Caco-2 (cell line): ENCODE measurements at regions of chr11 and their contacts with region 1.

Region 1: GRCh38 chr11:86068951-86069407 is at the start of gene PICALM:
- DNase-seq: peak; percentile 100
- H3K4me3 ChIP-seq: peak within 1 kb of the TSS; percentile 91
- H3K4me3 Mint-ChIP-seq: peak within 1 kb of the TSS; percentile 95
- H3K27ac Mint-ChIP-seq: peak within 1 kb of the TSS; percentile 85
- H3K4me1 ChIP-seq: peaks cover 24% of the 10 kb centered on the region
- H3K4me1 Mint-ChIP-seq: peaks cover 24% of the 10 kb centered on the region
- H3K27me3 ChIP-seq: no peaks in the 10 kb centered on the region
- H3K27me3 Mint-ChIP-seq: no peaks in the 10 kb centered on the region
- CTCF ChIP-seq: no peak
- total RNA-seq, gene PICALM: 321 and 331 TPM in 2 replicates

Region 2: DNA sequence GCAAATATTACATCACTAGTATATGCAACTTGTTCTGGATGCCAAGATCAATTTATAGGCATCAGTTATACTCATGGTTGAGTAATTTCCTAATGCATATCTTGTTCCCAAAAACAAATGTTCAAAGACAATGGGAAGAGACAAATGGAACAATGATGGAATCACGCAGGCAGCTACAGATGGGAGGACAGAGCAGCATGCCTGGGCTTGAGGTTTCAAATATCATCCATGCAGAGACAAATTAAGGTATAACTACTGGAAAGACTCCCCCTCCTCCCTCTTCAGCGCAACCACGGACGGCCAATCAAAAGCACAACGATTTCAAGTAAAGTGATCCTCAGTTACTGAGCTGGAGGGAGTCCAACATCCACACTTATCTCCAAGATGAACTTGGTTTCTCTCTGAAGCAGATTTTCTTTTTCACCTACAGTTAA is 107.0 kb before region 1 on chr11:
- CTCF ChIA-PET with region 1: no interaction called
- POLR2A ChIA-PET with region 1: no interaction called
- intact Hi-C with region 1: no loop called
- DNase-seq: no peak
- H3K4me3 ChIP-seq: no peak overlapping the region
- H3K4me3 Mint-ChIP-seq: no peak overlapping the region
- H3K27ac Mint-ChIP-seq: no peak overlapping the region
- H3K4me1 ChIP-seq: no peaks in the 10 kb centered on the region
- H3K4me1 Mint-ChIP-seq: no peaks in the 10 kb centered on the region
- H3K27me3 ChIP-seq: no peaks in the 10 kb centered on the region
- H3K27me3 Mint-ChIP-seq: no peaks in the 10 kb centered on the region
- CTCF ChIP-seq: no peak

Region 3: GRCh38 chr11:86041975-86042378 is 27.0 kb before region 1 on chr11:
- CTCF ChIA-PET with region 1: interaction called, 37 read pairs
- POLR2A ChIA-PET with region 1: no interaction called
- intact Hi-C with region 1: loop called (anchors 1 kb)
- DNase-seq: peak; percentile 86 to 91
- H3K4me3 ChIP-seq: no peak overlapping the region
- H3K4me3 Mint-ChIP-seq: no peak overlapping the region
- H3K27ac Mint-ChIP-seq: no peak overlapping the region
- H3K4me1 ChIP-seq: peaks cover 50% of the 10 kb centered on the region
- H3K4me1 Mint-ChIP-seq: peaks cover 51% of the 10 kb centered on the region
- H3K27me3 ChIP-seq: no peaks in the 10 kb centered on the region
- H3K27me3 Mint-ChIP-seq: no peaks in the 10 kb centered on the region
- CTCF ChIP-seq: peak; percentile 97 to 99

Region 4: GRCh38 chr11:86116386-86116726 is 47.4 kb after region 1 on chr11:
- CTCF ChIA-PET with region 1: interaction called, 3 read pairs
- POLR2A ChIA-PET with region 1: no interaction called
- intact Hi-C with region 1: loop called (anchors 2 kb)
- DNase-seq: no peak
- H3K4me3 ChIP-seq: no peak overlapping the region
- H3K4me3 Mint-ChIP-seq: no peak overlapping the region
- H3K27ac Mint-ChIP-seq: no peak overlapping the region
- H3K4me1 ChIP-seq: peaks cover 62% of the 10 kb centered on the region
- H3K4me1 Mint-ChIP-seq: peaks cover 34% of the 10 kb centered on the region
- H3K27me3 ChIP-seq: no peaks in the 10 kb centered on the region
- H3K27me3 Mint-ChIP-seq: no peaks in the 10 kb centered on the region
- CTCF ChIP-seq: no peak

Region 5: GRCh38 chr11:86138958-86139357 is 70.0 kb after region 1 on chr11:
- CTCF ChIA-PET with region 1: interaction called, 10 read pairs
- POLR2A ChIA-PET with region 1: interaction called, 16 read pairs
- intact Hi-C with region 1: loop called (anchors 1 kb)
- DNase-seq: no peak
- H3K4me3 ChIP-seq: no peak overlapping the region
- H3K4me3 Mint-ChIP-seq: no peak overlapping the region
- H3K27ac Mint-ChIP-seq: no peak overlapping the region
- H3K4me1 ChIP-seq: peaks cover 42% of the 10 kb centered on the region
- H3K4me1 Mint-ChIP-seq: peaks cover 18% of the 10 kb centered on the region
- H3K27me3 ChIP-seq: no peaks in the 10 kb centered on the region
- H3K27me3 Mint-ChIP-seq: no peaks in the 10 kb centered on the region
- CTCF ChIP-seq: no peak

Region 6: DNA sequence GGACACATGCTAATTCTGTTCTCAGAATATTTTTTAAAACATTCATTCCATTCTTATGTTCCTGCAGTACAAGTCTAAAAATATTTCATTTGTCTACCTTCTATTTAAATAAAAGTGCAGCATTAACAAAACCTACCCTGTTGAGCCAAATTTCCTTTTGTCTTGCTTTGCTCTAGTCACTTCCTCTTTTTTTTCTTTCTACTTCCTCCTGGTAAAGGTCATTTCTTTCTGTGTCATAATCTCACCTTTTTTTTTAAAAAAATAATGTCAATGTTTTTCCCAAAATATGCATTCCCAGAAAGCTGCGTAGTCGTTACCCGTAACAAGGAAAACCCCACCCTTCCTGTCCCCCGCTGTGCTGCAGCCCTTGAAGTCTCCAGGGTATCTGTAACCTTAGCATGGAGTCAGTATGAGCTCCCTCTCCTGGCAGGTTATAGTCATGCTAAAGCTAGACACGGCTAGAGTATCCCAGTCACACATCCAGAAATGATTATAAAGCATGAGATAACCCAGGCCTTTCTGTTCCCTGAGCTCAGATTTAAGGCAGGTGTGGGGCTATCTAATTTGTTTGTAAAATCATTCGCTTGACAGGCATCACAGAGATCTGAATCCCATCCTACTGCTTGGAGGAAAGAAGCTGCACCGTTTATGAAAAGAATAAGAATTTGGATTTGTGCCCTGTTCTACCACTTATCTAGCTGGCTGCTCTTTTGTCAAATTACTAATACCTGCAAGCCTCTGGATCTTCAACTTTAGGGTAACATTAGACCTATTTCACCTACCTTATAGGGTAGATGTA is 124.5 kb after region 1 on chr11:
- CTCF ChIA-PET with region 1: interaction called, 40 read pairs
- POLR2A ChIA-PET with region 1: interaction called, 16 read pairs
- intact Hi-C with region 1: loop called (anchors 1 kb)
- DNase-seq: peak; percentile 84 to 86
- H3K4me3 ChIP-seq: no peak overlapping the region
- H3K4me3 Mint-ChIP-seq: peak overlapping the region; percentile 70
- H3K27ac Mint-ChIP-seq: peak overlapping the region; percentile 54
- H3K4me1 ChIP-seq: peaks cover 48% of the 10 kb centered on the region
- H3K4me1 Mint-ChIP-seq: peaks cover 27% of the 10 kb centered on the region
- H3K27me3 ChIP-seq: no peaks in the 10 kb centered on the region
- H3K27me3 Mint-ChIP-seq: no peaks in the 10 kb centered on the region
- CTCF ChIP-seq: peak; percentile 95

Region 7: DNA sequence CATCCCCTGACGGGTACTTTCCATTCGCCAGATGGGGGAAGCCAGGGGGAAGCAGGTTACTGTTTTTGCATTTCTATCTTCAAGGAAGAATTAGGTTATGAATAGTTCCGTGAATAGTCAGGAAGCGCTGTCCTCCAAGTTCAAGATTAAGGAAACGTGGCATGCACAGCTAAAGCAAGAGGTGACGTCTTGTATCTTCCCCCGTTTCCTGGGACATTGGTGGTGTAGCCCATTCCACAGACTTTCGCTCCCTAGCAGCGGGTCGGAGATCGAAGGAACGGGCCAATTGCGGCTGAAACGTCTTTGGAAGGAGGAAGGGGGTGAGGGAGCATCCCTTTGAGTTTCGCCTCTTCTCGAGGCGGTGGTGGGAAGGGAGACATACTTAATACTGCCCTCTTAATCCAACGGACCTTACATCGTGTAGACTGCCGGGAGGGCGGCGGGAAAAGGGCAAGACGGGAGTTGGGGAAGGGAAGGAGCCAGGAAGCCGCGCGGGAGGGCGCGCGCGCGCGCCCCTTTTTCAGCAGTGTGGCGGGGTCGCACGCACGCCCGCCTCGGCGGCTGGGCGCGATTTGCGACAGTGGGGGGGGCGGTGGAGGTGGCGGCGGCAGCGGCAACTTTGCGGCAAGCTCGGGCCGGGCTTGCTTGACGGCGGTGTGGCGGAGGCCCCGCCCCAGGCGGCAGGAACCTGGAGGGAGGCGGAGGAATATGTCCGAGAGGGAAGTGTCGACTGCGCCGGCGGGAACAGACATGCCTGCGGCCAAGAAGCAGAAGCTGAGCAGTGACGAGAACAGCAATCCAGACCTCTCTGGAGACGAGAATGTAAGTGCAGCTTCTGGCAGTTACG is 175.8 kb after region 1 on chr11 and contains the start of gene EED:
- CTCF ChIA-PET with region 1: no interaction called
- POLR2A ChIA-PET with region 1: interaction called, 9 read pairs
- intact Hi-C with region 1: loop called (anchors 1 kb)
- DNase-seq: peak; percentile 99 to 100
- H3K4me3 ChIP-seq: peak within 1 kb of the TSS; percentile 74
- H3K4me3 Mint-ChIP-seq: no peak within 1 kb of the TSS
- H3K27ac Mint-ChIP-seq: no peak within 1 kb of the TSS
- H3K4me1 ChIP-seq: peaks cover 35% of the 10 kb centered on the region
- H3K4me1 Mint-ChIP-seq: peaks cover 45% of the 10 kb centered on the region
- H3K27me3 ChIP-seq: no peaks in the 10 kb centered on the region
- H3K27me3 Mint-ChIP-seq: no peaks in the 10 kb centered on the region
- CTCF ChIP-seq: no peak
- total RNA-seq, gene EED: 68.3 and 75.5 TPM in 2 replicates

Region 8: GRCh38 chr11:86818466-86819192 is 749.6 kb after region 1 on chr11:
- CTCF ChIA-PET with region 1: no interaction called
- POLR2A ChIA-PET with region 1: no interaction called
- intact Hi-C with region 1: loop called (anchors 10 kb)
- DNase-seq: peak in 1 of 2 experiments; percentile 74
- H3K4me3 ChIP-seq: no peak overlapping the region
- H3K4me3 Mint-ChIP-seq: no peak overlapping the region
- H3K27ac Mint-ChIP-seq: peak overlapping the region; percentile 23
- H3K4me1 ChIP-seq: peaks cover 52% of the 10 kb centered on the region
- H3K4me1 Mint-ChIP-seq: peaks cover 41% of the 10 kb centered on the region
- H3K27me3 ChIP-seq: no peaks in the 10 kb centered on the region
- H3K27me3 Mint-ChIP-seq: no peaks in the 10 kb centered on the region
- CTCF ChIP-seq: peak; percentile 83 to 95